ENCODE measurements at regions of chr3 and their contacts with region 1.

Region 1: DNA sequence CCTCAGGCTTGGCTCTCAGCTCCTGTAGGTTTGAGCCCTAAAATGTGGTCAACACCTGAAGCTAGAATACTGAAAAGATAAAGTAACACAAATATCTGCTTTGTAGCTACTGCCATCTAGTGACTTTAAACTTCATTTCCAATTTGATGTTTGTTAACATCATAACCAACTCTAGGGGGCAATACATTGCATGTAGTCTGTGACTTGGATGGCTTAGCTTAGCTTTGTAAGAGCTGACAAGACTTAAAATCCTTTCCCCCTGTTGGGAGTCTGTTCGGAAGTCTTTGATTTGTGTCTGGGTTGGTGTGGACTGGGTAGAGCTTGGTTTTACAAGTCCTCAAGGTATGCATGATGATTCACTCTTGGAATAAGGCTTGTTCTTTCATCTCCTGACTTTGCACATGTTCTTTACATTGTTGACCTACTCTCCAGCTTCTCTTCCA is 51.7 kb downstream of the SCN11A start:
- DNase-seq: peak; percentile 55
- H3K4me3 Mint-ChIP-seq: no peak overlapping the region
- H3K27ac Mint-ChIP-seq: no peak overlapping the region
- H3K4me1 Mint-ChIP-seq: peaks cover 6% of the 10 kb centered on the region
- H3K27me3 Mint-ChIP-seq: peaks cover 48% of the 10 kb centered on the region
- CTCF ChIP-seq: peak; percentile 78

Region 2: DNA sequence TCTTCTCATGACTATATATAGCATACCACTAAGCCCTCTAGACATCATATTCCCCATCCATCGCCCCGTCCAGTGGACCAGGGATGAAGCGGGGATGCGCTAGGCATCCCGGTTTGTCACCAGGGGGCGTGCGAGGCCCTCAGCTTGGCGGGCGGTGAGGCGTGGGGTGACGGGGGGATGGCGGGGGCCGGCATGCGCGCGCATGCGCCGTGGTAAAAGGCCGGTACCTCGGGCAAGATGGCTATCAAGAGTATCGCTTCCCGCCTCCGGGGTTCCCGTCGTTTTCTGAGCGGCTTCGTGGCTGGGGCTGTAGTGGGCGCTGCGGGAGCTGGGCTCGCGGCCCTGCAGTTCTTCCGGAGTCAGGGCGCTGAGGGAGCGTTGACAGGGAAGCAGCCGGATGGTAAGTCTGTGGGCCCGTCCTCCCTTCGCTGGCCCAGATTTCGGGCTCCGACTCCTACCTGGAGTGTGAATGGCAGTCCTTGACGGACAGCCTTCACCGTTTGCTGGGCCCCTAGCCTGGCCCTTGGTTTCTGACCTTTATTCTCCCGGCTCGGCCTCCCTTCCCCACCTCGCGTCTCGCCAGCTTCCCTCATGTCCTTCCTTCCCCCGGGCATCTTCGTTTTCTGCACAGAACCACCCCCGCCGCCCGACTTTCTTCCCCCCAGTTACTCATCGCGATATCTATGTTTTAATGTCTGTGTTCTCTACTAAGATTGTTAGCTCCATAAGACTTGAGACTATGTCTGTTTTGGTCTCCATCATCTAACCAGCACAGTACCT is 503.7 kb before region 1 on chr3 and contains the start of gene EXOG:
- CTCF ChIA-PET with region 1: interaction called, 23 read pairs
- POLR2A ChIA-PET with region 1: no interaction called
- intact Hi-C with region 1: no loop called
- DNase-seq: peak; percentile 91
- H3K4me3 Mint-ChIP-seq: peak within 1 kb of the TSS; percentile 78
- H3K27ac Mint-ChIP-seq: peak within 1 kb of the TSS; percentile 33
- H3K4me1 Mint-ChIP-seq: peaks cover 9% of the 10 kb centered on the region
- H3K27me3 Mint-ChIP-seq: no peaks in the 10 kb centered on the region
- CTCF ChIP-seq: peak; percentile 82
- total RNA-seq, gene EXOG: 17.5 and 21.9 TPM in 2 replicates

Region 3: GRCh38 chr3:38738630-38739395 is 261.2 kb before region 1 on chr3:
- CTCF ChIA-PET with region 1: interaction called, 4 read pairs
- POLR2A ChIA-PET with region 1: no interaction called
- intact Hi-C with region 1: loop called (anchors 1 kb)
- DNase-seq: peak; percentile 71
- H3K4me3 Mint-ChIP-seq: no peak overlapping the region
- H3K27ac Mint-ChIP-seq: no peak overlapping the region
- H3K4me1 Mint-ChIP-seq: no peaks in the 10 kb centered on the region
- H3K27me3 Mint-ChIP-seq: peaks cover 22% of the 10 kb centered on the region
- CTCF ChIP-seq: peak; percentile 27

Region 4: DNA sequence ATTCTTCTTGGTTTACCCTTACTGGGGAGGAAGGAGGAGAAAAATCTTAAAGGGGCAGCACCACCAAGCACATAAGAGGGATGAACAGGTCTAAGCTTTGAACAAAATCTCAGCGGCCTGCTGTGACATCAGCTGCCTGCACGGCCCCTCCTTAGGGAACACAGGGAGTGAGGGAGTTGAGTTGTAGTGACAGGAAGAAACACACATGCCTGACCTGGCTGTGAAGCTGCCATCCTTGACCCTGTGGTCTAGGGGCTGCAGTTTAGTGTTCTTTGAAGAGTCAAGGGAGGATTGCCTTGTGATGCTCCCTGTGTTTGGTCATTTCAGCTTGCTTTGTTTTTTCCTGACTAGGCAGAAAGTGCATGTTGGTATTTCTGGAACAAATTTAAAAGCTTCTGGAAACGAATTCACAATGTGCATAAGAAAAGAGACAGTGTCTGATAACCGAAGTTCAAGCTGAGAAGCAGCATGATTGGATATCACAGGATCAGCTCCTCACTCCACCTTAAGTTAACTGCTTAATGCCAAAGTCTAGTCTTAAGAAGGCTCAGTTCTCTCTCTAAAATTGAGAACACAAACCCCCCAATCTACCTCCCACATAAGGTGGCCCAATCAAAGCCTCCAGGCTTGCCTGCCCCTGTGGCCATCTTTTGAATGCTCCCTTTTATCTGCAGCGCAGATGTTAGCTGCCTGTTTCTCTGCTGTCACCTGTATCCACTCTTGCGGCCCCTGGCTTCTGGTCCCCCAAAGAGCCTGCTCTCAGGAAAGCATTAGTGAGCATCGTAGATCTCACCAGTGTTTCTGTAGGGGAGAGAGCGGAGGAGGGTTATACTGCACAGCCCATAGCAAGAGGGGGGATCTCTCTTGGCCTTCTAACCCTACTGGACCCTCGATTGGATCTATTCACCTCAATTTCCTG is 30.5 kb before region 1 on chr3:
- CTCF ChIA-PET with region 1: interaction called, 15 read pairs
- POLR2A ChIA-PET with region 1: no interaction called
- intact Hi-C with region 1: no loop called
- DNase-seq: no peak
- H3K4me3 Mint-ChIP-seq: no peak overlapping the region
- H3K27ac Mint-ChIP-seq: no peak overlapping the region
- H3K4me1 Mint-ChIP-seq: no peaks in the 10 kb centered on the region
- H3K27me3 Mint-ChIP-seq: peaks cover 22% of the 10 kb centered on the region
- CTCF ChIP-seq: no peak

Region 5: DNA sequence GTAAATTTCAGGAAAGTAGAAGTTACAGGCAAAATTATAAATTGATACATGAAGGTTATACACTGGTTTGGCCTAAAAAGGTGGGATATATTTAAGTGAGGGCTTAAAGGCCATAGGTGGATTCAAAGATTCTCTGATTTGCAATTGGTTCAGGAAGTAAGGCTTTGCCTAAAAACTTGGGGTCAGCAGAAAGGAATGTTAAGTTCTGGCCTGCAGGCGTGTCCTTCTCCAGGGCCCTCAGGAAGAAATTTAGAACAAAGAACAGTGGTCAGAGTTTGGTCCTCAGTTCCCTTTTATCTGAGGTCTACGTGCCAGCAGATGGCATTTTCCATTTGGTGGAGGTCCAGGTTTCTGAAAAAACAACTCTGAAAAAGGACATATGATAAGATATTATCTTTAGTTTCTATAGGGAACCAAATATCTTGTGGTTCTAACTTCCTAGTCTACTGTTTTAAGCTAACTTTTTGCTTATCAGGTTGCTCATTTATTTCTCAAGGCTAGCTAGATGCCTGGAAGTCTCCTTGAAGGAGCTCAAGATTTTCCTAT is 11.2 kb after region 1 on chr3:
- CTCF ChIA-PET with region 1: interaction called, 33 read pairs
- POLR2A ChIA-PET with region 1: no interaction called
- intact Hi-C with region 1: no loop called
- DNase-seq: no peak
- H3K4me3 Mint-ChIP-seq: no peak overlapping the region
- H3K27ac Mint-ChIP-seq: no peak overlapping the region
- H3K4me1 Mint-ChIP-seq: no peaks in the 10 kb centered on the region
- H3K27me3 Mint-ChIP-seq: peaks cover 60% of the 10 kb centered on the region
- CTCF ChIP-seq: no peak

Region 6: GRCh38 chr3:39329493-39329892 is 329.5 kb after region 1 on chr3 and contains the start of gene CCR8:
- CTCF ChIA-PET with region 1: no interaction called
- POLR2A ChIA-PET with region 1: no interaction called
- intact Hi-C with region 1: no loop called
- DNase-seq: no peak
- H3K4me3 Mint-ChIP-seq: no peak within 1 kb of the TSS
- H3K27ac Mint-ChIP-seq: no peak within 1 kb of the TSS
- H3K4me1 Mint-ChIP-seq: no peaks in the 10 kb centered on the region
- H3K27me3 Mint-ChIP-seq: no peaks in the 10 kb centered on the region
- CTCF ChIP-seq: no peak
- total RNA-seq, gene CCR8: not detected in 2 replicates

Measured in MCF 10A (cell line).